Testis (tissue), 5 donors: ENCODE measurements at regions of chr2 and their contacts with region 1.

Region 1: DNA sequence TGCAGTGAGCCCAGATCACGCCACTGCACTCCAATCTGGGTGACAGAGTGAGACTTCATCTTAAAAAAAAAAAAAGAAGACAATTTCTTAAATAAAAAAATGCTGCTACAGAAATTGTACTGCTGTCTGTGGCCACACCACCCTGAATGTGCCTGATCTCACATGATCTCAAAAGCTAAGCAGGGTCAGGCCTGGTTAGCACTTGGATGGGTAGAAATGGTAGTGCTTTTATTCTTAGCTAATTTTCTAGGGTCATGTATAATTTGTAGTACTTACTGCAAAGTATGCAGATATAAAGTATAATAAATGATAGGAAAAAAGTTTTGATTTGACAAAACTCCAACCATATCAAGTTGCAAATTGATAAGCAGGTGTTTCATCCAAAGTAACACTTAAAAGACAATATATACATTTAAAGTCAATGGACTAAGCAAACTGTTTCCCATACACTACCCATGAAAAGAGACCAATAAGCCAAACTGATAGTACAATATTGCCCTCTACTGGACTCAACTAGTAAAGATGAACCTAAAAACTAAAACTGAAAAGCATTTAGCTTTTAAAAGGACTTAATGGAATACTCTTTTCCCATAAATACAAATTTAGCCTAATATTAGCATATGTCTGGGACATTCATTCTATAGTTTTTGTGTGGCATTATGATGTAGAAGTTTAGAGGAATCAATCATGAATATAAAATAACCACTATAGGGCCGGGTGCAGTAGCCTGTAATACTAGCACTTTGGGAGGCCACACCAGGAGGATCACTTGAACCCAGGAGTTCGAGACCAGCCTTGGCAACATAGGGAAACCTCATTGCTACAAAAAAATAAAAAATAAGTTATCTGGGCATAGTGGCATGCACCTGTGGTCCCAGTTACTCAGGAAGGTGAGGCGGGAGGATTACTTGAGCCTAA is 18.6 kb upstream of the PEX13 start:
- DNase-seq: no peak
- H3K4me3 ChIP-seq: no peak overlapping the region
- H3K27ac ChIP-seq: no peak overlapping the region
- H3K4me1 ChIP-seq: no peaks in the 10 kb centered on the region
- H3K27me3 ChIP-seq: no peaks in the 10 kb centered on the region
- CTCF ChIP-seq: peak; percentile 32 to 56 (median 41)
- POLR2A ChIP-seq: no peak

Region 2: GRCh38 chr2:60710707-60711106 is 288.2 kb before region 1 on chr2:
- intact Hi-C with region 1: loop called (anchors 10 kb)
- DNase-seq: peak; percentile 22
- H3K4me3 ChIP-seq: no peak overlapping the region
- H3K27ac ChIP-seq: no peak overlapping the region
- H3K4me1 ChIP-seq: no peaks in the 10 kb centered on the region
- H3K27me3 ChIP-seq: no peaks in the 10 kb centered on the region
- CTCF ChIP-seq: no peak
- POLR2A ChIP-seq: no peak

Region 3: GRCh38 chr2:61125123-61125710 is 126.3 kb after region 1 on chr2:
- intact Hi-C with region 1: no loop called
- DNase-seq: no peak
- H3K4me3 ChIP-seq: no peak overlapping the region
- H3K27ac ChIP-seq: no peak overlapping the region
- H3K4me1 ChIP-seq: no peaks in the 10 kb centered on the region
- H3K27me3 ChIP-seq: no peaks in the 10 kb centered on the region
- CTCF ChIP-seq: no peak
- POLR2A ChIP-seq: no peak